Activated naive CD4-positive, alpha-beta T cell treated with anti-CD3 and anti-CD28 coated beads for 36 hours (primary cell): ENCODE measurements at regions of chr18 and their contacts with region 1.

Region 1: GRCh38 chr18:21004726-21005125 is 106.9 kb downstream of the ROCK1 start:
- DNase-seq: no peak
- H3K4me3 Mint-ChIP-seq: no peak overlapping the region
- H3K27ac Mint-ChIP-seq: no peak overlapping the region
- H3K4me1 Mint-ChIP-seq: peaks cover 13% of the 10 kb centered on the region
- H3K27me3 Mint-ChIP-seq: no peaks in the 10 kb centered on the region

Region 2: DNA sequence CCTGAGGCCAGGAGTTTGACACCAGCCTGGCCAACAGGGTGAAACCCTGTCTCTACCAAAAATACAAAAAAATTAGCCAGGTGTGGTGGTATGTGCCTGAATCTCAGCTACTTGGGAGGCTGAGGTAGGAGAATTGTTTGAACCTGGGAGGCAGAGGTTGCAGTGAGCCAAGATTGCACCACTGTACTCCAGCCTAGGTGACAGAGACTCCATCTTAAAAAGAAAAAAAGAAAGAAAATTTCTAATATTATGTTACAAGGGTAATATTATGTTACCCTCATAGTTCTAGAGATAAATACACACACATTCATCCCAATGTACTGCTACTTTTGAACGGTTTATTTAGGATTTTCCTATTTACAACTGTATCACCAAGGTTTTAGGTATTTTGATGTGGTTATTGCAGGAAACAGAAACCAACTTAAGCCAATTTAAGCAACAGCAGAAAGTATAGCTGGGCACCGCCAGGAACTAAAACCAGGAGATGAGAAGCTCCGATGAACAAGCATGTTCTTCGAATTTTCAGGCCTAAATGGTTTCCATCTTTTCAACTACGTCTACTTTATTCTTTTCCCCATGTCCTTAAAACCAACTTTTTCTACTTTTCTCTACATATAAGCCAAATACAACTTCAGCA is 118.7 kb after region 1 on chr18:
- CTCF ChIA-PET with region 1: no interaction called
- intact Hi-C with region 1: no loop called
- DNase-seq: no peak
- H3K4me3 Mint-ChIP-seq: no peak overlapping the region
- H3K27ac Mint-ChIP-seq: no peak overlapping the region
- H3K4me1 Mint-ChIP-seq: peaks cover 7% of the 10 kb centered on the region
- H3K27me3 Mint-ChIP-seq: no peaks in the 10 kb centered on the region

Region 3: GRCh38 chr18:21179590-21180220 is 175.0 kb after region 1 on chr18:
- CTCF ChIA-PET with region 1: interaction called, 13 read pairs
- intact Hi-C with region 1: no loop called
- DNase-seq: peak; percentile 72
- H3K4me3 Mint-ChIP-seq: no peak overlapping the region
- H3K27ac Mint-ChIP-seq: no peak overlapping the region
- H3K4me1 Mint-ChIP-seq: peaks cover 3% of the 10 kb centered on the region
- H3K27me3 Mint-ChIP-seq: no peaks in the 10 kb centered on the region